Endothelial cell of umbilical vein (primary cell): ENCODE measurements at regions of chr1 and their contacts with region 1.

Region 1: DNA sequence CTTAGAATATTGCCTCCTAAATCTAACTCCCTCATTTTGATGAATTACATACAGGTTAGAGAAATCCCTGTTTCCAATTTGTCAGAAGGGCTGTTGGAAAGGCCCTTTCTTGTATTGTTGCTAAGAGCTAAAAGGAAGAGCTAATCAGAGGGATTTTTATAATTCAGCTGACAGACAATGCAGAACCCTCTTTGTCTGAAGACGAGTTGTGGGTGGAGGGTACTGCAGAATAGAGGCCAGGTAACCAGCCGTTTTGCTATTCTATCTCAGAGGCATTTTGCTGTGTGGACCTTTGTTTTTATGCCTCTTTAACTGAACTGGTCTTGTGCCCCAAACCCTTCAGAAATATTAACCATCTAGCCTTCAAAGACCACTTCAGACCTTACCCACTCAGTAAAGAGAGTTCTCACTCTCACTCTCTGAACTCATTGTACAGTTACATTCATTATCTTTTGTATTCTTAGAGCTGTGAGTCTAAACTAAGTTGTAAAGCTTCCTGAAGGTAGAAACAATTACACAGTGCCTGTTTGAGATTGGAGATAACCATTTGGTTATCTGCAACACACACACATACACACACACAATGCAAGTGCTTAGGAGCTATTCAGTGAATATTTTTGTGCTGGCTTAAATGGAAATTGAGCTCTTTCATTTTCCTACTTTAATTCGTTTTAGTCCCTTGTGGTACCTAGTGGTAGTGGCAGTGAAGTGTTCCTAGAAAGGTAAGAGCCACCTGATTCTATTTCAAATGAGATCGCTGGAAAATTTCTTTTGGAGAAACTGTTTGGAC is 19.7 kb downstream of the KPNA6 start:
- DNase-seq: peak; percentile 31
- H3K4me3 ChIP-seq: no peak overlapping the region
- H3K27ac ChIP-seq: no peak overlapping the region
- H3K4me1 ChIP-seq: peaks cover 10% of the 10 kb centered on the region
- H3K27me3 ChIP-seq: no peaks in the 10 kb centered on the region
- CTCF ChIP-seq: no peak
- POLR2A ChIP-seq: no peak

Region 2: GRCh38 chr1:32138943-32139342 is 11.3 kb after region 1 on chr1:
- CTCF ChIA-PET with region 1: interaction called, 19 read pairs
- POLR2A ChIA-PET with region 1: no interaction called
- dilution Hi-C with region 1: no loop called
- intact Hi-C with region 1: no loop called
- DNase-seq: peak; percentile 48
- H3K4me3 ChIP-seq: no peak overlapping the region
- H3K27ac ChIP-seq: peak overlapping the region; percentile 38
- H3K4me1 ChIP-seq: peaks cover 11% of the 10 kb centered on the region
- H3K27me3 ChIP-seq: no peaks in the 10 kb centered on the region
- CTCF ChIP-seq: no peak
- POLR2A ChIP-seq: no peak

Region 3: DNA sequence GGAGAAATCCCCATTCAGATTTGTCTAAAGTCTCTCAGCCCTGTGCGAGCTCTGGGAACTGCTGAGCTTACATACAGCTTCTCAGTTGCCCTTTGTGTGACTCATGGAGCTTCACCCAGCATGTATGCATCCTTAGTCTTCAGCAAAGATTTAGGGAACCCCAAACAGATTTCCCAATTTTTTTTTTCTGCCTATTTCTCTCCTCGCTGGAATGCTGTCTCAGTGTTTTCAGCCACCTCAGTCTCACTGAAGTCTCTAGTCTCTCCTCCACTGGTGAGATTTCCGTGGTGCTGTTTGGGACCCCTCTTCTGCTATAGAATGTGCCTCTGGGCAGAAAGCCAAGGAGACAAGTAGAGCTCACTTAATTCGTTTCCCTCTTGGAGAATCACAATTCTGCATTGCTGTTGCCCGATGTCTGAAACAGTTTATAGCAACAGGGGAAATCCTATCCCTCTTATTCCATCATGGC is 23.7 kb after region 1 on chr1:
- CTCF ChIA-PET with region 1: interaction called, 12 read pairs
- POLR2A ChIA-PET with region 1: no interaction called
- dilution Hi-C with region 1: no loop called
- intact Hi-C with region 1: no loop called
- DNase-seq: peak; percentile 16
- H3K4me3 ChIP-seq: no peak overlapping the region
- H3K27ac ChIP-seq: no peak overlapping the region
- H3K4me1 ChIP-seq: no peaks in the 10 kb centered on the region
- H3K27me3 ChIP-seq: no peaks in the 10 kb centered on the region
- CTCF ChIP-seq: no peak
- POLR2A ChIP-seq: no peak